ENCODE measurements at regions of chr16 and their contacts with region 1.

Region 1: DNA sequence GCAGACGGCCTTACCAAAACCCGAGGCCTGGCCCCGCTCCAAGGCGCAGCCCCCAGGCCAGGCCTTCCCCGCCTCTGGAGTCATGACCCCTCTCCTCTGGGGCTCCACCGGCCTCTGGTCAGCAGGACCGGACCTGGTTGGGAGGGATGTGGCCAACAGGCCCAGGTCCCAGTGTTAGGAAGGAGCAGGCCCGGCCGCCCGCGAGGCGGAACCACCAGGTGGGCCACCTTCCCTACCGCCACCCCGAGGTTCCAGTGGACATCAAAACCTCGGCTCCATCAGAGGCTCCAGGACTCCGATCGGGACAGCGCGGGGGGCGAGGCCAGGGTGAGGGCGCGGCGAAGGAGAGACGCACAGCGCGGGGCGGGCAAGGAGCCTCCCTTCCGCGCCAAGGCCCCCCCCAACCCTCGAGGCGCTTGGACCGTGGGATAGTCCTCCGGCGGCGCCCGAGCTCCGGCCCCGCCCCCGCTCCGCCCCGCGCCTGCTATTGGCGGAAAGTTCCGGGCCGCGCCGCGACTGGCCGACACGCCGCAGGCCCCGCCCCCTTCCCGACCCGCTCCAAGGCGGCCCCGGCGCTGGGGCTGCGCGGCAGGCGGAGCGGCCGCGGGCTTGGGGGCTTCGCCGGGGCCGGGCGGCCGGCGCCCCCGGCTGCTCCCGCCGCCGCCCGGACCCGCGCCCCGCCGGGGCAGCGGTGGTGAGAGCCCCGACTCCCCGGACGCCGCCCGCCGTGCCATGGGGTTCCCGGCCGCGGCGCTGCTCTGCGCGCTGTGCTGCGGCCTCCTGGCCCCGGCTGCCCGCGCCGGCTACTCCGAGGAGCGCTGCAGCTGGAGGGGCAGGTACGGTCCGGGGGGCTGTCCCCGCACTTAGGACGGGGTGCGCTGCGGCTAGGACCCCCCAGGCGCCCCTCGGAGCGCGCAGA is at the start of gene METRN:
- DNase-seq: peak; percentile 98
- H3K4me3 Mint-ChIP-seq: peak within 1 kb of the TSS; percentile 62
- H3K27ac Mint-ChIP-seq: no peak within 1 kb of the TSS
- H3K4me1 Mint-ChIP-seq: peaks cover 4% of the 10 kb centered on the region
- H3K27me3 Mint-ChIP-seq: peaks cover 24% of the 10 kb centered on the region
- total RNA-seq, gene METRN: 27.7 and 30.2 TPM in 2 replicates

Region 2: GRCh38 chr16:740764-741505 is 26.1 kb after region 1 on chr16 and contains the start of gene CIAO3:
- intact Hi-C with region 1: loop called (anchors 1 kb)
- DNase-seq: peak; percentile 98
- H3K4me3 Mint-ChIP-seq: peak within 1 kb of the TSS; percentile 85
- H3K27ac Mint-ChIP-seq: peak within 1 kb of the TSS; percentile 62
- H3K4me1 Mint-ChIP-seq: peaks cover 9% of the 10 kb centered on the region
- H3K27me3 Mint-ChIP-seq: no peaks in the 10 kb centered on the region
- total RNA-seq, gene CIAO3: 39.5 and 42.5 TPM in 2 replicates

Region 3: GRCh38 chr16:886084-886543 is 171.3 kb after region 1 on chr16:
- intact Hi-C with region 1: no loop called
- DNase-seq: no peak
- H3K4me3 Mint-ChIP-seq: no peak overlapping the region
- H3K27ac Mint-ChIP-seq: no peak overlapping the region
- H3K4me1 Mint-ChIP-seq: no peaks in the 10 kb centered on the region
- H3K27me3 Mint-ChIP-seq: no peaks in the 10 kb centered on the region